GM23248 (cell line): ENCODE measurements at regions of chr17 and their contacts with region 1.

Region 1: DNA sequence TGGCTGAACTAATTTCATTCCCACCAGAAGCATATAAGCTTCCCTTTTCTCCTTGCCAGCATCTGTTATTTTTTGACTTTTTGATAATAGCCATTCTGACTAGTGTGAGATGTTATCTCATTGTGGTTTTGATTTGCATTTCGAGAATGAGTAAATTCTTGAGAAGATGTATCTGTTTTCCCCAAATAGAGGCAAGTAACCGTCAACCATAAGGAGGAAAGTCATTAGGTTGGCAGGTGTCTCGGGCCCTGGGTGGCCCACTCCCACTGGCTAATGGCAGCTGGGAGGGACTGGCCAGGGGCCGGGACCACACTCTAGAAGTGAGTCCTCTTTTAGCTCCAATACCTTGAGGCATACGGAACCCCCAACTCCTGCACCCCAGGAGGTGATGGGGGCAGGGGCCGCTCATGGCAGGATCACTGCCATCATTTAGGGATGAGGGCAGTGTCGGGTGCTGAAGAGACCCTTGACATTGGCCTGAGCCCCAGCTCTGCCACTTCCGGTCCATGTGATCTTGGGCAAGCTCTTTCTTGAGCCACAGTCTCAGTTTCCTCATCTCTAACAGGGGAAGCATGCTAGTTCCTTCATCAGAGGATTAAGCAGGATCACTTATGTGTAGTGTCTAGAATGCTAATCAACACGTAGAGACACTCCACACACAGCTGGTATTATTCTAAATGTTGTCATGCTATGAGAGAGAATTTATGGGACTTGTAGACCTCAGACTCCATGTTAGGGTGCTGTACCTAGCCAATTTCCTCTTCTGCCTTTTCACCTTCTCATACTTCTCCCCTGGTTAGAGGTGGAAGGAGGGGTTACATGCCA is 44.3 kb downstream of the RGS9 start:
- DNase-seq: no peak
- H3K4me3 ChIP-seq: no peak overlapping the region
- H3K27ac ChIP-seq: no peak overlapping the region
- H3K4me1 ChIP-seq: peaks cover 3% of the 10 kb centered on the region
- H3K27me3 ChIP-seq: 0 out of 2 replicates have a peak, but pooled peaks cover 9% of the 10 kb centered on the region

Region 2: GRCh38 chr17:64718059-64718458 is 463.4 kb before region 1 on chr17:
- in situ Hi-C with region 1: no loop called
- DNase-seq: no peak
- H3K4me3 ChIP-seq: no peak overlapping the region
- H3K27ac ChIP-seq: no peak overlapping the region
- H3K4me1 ChIP-seq: peaks cover 16% of the 10 kb centered on the region
- H3K27me3 ChIP-seq: no peaks in the 10 kb centered on the region

Region 3: DNA sequence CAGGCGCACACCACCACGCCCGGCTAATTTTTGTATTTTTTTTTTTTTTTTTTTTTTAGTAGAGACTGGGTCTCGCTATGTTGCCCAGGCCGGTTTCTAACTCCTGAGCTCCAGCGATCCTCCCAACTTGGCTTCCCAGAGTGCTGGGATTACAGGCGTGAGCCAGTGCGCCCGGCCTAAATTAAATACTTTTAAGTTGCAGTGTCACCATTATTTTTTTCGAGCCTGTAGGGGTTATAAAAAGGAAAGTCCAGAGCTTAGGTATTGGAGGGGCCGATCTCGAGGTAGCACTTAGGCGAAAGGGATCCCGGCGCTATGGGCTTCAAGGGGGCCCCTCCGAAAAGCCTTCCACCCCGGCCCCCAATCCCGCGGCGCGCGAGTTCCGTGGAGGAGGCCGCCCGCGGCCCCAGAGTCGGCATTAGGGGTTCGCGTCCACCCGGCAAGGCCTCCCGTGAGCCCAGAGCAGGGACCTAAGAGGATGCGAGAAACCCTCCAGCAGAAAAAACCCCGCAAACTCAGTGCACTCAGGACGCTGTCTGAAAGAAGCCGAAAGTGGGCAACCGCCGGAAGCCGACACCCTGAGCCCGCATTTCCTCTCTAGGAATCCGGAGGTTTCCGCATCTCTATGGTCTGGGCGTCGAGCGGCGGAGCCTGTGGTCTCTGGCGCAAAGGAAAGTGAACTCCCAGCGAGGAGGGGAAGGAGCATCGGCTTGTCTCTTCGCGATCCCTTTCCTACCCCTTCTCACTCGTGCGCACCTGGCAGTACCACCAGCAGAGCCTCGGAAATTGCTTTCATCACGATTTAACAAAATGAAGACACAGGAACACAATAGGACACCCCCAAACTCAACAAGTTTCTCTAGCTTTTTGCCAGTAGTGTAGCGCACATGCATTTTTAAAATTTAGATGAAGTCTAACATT is 58.4 kb before region 1 on chr17:
- in situ Hi-C with region 1: loop called (anchors 10 kb)
- DNase-seq: peak; percentile 89
- H3K4me3 ChIP-seq: peak overlapping the region; percentile 73
- H3K27ac ChIP-seq: peak overlapping the region; percentile 55
- H3K4me1 ChIP-seq: peaks cover 14% of the 10 kb centered on the region
- H3K27me3 ChIP-seq: no peaks in the 10 kb centered on the region